ENCODE measurements at regions of chr10 and their contacts with region 1.

Region 1: DNA sequence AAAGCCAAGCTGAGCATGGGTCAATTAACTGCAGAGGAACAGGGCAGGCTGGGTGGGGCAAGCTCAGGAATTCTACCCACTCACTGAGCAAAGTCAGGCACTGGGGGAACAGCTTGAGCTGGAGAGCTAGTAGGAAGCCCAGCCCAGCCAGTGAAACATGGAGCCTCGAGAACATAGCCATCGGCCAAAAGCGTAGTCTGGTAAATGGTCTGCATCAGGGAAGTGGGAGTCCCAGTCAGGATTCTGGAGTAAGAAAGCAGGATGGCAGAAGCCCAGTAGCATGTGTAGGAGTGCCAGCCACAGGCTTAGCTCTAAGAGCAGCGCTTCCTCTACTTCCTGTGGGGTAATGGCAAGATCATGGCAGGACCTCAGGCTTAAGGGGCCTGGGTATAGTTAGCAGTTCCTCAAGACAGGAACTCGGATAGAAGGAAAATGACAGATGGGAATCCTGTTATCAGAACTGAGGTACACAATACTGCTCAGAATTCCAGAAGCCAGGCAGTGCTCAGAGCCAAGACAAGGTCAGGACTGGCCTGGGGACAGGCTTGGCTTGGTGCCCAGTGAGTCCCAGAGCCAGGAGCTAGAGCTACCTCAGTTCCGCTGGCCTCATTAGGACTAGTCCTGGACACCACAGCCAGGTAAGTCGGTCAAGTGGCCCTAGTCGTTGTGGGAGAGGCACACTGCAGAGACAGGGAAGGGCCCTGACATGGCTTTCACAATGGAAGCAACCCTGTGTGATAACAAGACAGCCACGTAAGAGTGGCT is 65.4 kb upstream of the MXI1 start:
- DNase-seq: no peak
- ATAC-seq: no peak

Region 2: DNA sequence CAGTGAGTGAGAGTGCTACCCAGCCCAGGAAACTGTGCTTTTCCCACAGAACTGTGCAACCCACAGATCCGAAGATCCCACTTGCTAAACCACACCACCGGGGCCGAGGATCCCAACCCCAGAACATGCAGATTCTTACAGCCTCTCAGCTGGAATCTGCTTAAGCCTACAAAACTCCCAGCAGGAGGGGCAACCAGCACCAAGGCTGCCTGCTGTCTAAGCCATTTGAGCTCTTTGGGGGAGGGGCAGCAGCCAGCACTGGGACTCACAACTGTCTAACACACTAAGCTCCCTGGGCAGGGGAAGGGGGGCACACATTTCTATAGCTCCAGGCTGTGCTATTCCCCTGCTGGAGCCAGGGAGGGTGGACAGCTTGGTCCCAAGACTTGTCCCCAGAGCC is 748.6 kb before region 1 on chr10:
- intact Hi-C with region 1: no loop called
- DNase-seq: no peak
- ATAC-seq: no peak

Region 3: GRCh38 chr10:110279407-110279986 is 137.4 kb after region 1 on chr10:
- intact Hi-C with region 1: loop called (anchors 5 kb)
- DNase-seq: peak; percentile 72
- ATAC-seq: peak; percentile 83